ENCODE measurements at regions of chr5 and their contacts with region 1.

Region 1: GRCh38 chr5:38666668-38667498 is 110.4 kb upstream of the LIFR start:
- DNase-seq: peak; percentile 50
- ATAC-seq: peak; percentile 88

Region 2: GRCh38 chr5:38414348-38414747 is 252.5 kb before region 1 on chr5:
- intact Hi-C with region 1: no loop called
- DNase-seq: no peak
- ATAC-seq: no peak

Region 3: DNA sequence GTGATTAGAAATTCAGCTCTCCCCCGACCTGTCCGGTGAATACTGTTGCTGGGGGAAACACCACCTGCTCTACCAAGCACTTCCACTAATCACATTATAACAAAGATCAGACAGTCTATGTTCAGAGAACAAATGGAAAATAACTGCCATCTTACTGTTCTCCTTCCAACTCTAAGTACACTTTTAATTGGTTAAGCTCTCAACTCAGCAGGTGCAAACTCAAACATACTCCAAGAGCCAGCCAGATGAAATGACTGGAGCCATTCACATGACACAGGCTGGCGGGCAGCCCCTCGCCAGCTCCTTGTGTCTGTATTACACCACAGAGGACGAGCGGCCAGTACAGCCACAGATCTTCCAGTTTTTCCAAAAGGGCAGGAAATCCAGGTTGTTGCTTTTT is 126.6 kb before region 1 on chr5:
- intact Hi-C with region 1: no loop called
- DNase-seq: peak; percentile 77
- ATAC-seq: peak; percentile 93

Region 4: DNA sequence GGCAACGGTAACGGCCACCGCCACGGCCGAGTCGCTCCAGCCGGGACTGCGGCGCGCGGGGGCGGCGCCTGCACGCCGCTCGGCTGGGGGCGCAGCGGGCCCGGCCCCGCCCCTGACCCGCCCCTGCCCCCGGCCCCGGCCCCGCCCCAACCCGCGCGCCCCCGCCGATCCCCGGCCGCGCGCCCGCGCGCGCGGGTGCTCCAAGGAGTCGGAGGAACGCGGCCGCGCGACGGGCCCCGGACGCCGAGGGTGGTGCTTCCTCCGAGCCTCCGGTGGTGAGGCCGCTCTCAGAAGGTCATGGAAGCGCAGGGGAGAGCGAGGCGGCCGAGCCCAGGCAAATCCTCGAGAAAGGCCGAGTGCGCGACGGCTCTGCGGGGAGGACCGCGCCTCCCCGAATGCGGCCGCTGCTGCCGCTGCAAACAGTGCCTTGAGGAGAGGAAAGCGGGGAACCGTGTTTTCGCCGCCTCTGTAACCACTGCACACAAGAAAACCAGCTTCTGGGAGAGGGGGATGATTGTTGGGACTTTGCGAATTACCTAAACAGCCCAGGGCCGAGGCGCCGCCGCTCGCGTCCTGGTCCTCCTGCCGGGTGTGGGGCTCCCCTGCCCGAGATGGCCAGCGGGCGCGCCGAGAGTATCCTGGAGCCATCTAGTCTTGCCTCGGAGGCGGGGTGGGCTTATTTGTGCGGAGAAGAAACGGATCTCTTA is 110.1 kb before region 1 on chr5 and contains the start of gene LIFR:
- intact Hi-C with region 1: loop called (anchors 5 kb)
- DNase-seq: peak; percentile 91
- ATAC-seq: peak; percentile 90
- total RNA-seq, gene LIFR: 53.2 TPM

Measured in Right ventricle myocardium superior (tissue), 1 donor.